CD4-positive, alpha-beta memory T cell (primary cell): ENCODE measurements at regions of chr9 and their contacts with region 1.

Region 1: GRCh38 chr9:83707768-83708514 is at the start of gene UBQLN1:
- DNase-seq: peak; percentile 93 to 98 (median 95)
- H3K4me3 ChIP-seq: peak within 1 kb of the TSS; percentile 94 to 97
- H3K4me3 Mint-ChIP-seq: peak within 1 kb of the TSS; percentile 87 to 99 (median 92)
- H3K27ac ChIP-seq: peak within 1 kb of the TSS; percentile 98
- H3K27ac Mint-ChIP-seq: peak within 1 kb of the TSS; percentile 99 to 100 (median 100)
- H3K4me1 ChIP-seq: peaks cover 42% of the 10 kb centered on the region
- H3K4me1 Mint-ChIP-seq: peaks cover 30 to 45% (median 38%) of the 10 kb centered on the region in 4 donors
- H3K27me3 ChIP-seq: no peaks in the 10 kb centered on the region
- H3K27me3 Mint-ChIP-seq: no peaks in the 10 kb centered on the region
- total RNA-seq, gene UBQLN1: 106 to 122 TPM

Region 2: GRCh38 chr9:83346655-83347420 is 361.1 kb before region 1 on chr9:
- CTCF ChIA-PET with region 1: no interaction called
- POLR2A ChIA-PET with region 1: no interaction called
- intact Hi-C with region 1: no loop called
- DNase-seq: no peak
- H3K4me3 ChIP-seq: no peak overlapping the region
- H3K4me3 Mint-ChIP-seq: no peak overlapping the region
- H3K27ac ChIP-seq: no peak overlapping the region
- H3K27ac Mint-ChIP-seq: no peak overlapping the region
- H3K4me1 ChIP-seq: no peaks in the 10 kb centered on the region
- H3K4me1 Mint-ChIP-seq: no peaks in the 10 kb centered on the region
- H3K27me3 ChIP-seq: no peaks in the 10 kb centered on the region
- H3K27me3 Mint-ChIP-seq: no peaks in the 10 kb centered on the region

Region 3: GRCh38 chr9:83649080-83649479 is 58.9 kb before region 1 on chr9:
- CTCF ChIA-PET with region 1: interaction called, 18 read pairs
- POLR2A ChIA-PET with region 1: interaction called, 5 read pairs
- intact Hi-C with region 1: no loop called
- DNase-seq: peak; percentile 61 to 74 (median 68)
- H3K4me3 ChIP-seq: no peak overlapping the region
- H3K4me3 Mint-ChIP-seq: no peak overlapping the region
- H3K27ac ChIP-seq: no peak overlapping the region
- H3K27ac Mint-ChIP-seq: peak overlapping the region in 3 of 7 donors; percentile 3 to 52 (median 52)
- H3K4me1 ChIP-seq: no peaks in the 10 kb centered on the region
- H3K4me1 Mint-ChIP-seq: peaks cover 0 to 6% (median 2%) of the 10 kb centered on the region in 4 donors
- H3K27me3 ChIP-seq: no peaks in the 10 kb centered on the region
- H3K27me3 Mint-ChIP-seq: no peaks in the 10 kb centered on the region

Region 4: DNA sequence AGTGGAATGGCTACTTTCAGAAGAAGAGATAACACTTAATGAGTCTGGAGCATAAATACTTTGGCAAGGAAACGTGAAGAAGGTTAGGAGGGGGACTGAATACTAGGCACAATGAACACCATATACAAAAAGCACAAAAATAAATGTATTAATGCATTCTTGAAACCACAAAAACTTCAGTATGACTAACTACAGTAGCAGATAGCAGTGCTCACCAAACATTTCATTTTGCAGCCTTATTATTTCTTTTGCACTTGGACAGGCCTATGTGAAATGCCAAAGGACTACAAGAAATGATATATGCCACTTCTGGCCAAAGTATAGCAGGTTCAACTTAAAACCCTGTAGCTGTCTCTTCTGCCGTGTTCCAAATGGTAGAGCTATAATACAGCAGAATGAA is 26.5 kb before region 1 on chr9:
- CTCF ChIA-PET with region 1: interaction called, 6 read pairs
- POLR2A ChIA-PET with region 1: interaction called, 16 read pairs
- intact Hi-C with region 1: no loop called
- DNase-seq: no peak
- H3K4me3 ChIP-seq: no peak overlapping the region
- H3K4me3 Mint-ChIP-seq: no peak overlapping the region
- H3K27ac ChIP-seq: no peak overlapping the region
- H3K27ac Mint-ChIP-seq: peak overlapping the region in 4 of 7 donors; percentile 15 to 59 (median 31)
- H3K4me1 ChIP-seq: peaks cover 15% of the 10 kb centered on the region
- H3K4me1 Mint-ChIP-seq: peaks cover 15 to 40% (median 23%) of the 10 kb centered on the region in 4 donors
- H3K27me3 ChIP-seq: no peaks in the 10 kb centered on the region
- H3K27me3 Mint-ChIP-seq: no peaks in the 10 kb centered on the region

Region 5: GRCh38 chr9:83920927-83921707 is 213.2 kb after region 1 on chr9 and contains the start of gene KIF27:
- CTCF ChIA-PET with region 1: interaction called, 3 read pairs
- POLR2A ChIA-PET with region 1: interaction called, 26 read pairs
- intact Hi-C with region 1: loop called (anchors 1 kb)
- DNase-seq: peak; percentile 93 to 95 (median 94)
- H3K4me3 ChIP-seq: peak within 1 kb of the TSS; percentile 20 to 67
- H3K4me3 Mint-ChIP-seq: peak within 1 kb of the TSS; percentile 90 to 95 (median 92)
- H3K27ac ChIP-seq: peak within 1 kb of the TSS; percentile 83
- H3K27ac Mint-ChIP-seq: peak within 1 kb of the TSS; percentile 84 to 98 (median 97)
- H3K4me1 ChIP-seq: peaks cover 11% of the 10 kb centered on the region
- H3K4me1 Mint-ChIP-seq: peaks cover 8 to 18% (median 10%) of the 10 kb centered on the region in 4 donors
- H3K27me3 ChIP-seq: no peaks in the 10 kb centered on the region
- H3K27me3 Mint-ChIP-seq: no peaks in the 10 kb centered on the region
- total RNA-seq, gene KIF27: 4.7 to 5.2 TPM

Region 6: GRCh38 chr9:83980395-83981125 is 272.6 kb after region 1 on chr9 and contains the start of gene RMI1:
- CTCF ChIA-PET with region 1: interaction called, 3 read pairs
- POLR2A ChIA-PET with region 1: interaction called, 34 read pairs
- intact Hi-C with region 1: loop called (anchors 1 kb)
- DNase-seq: peak; percentile 98 to 99 (median 99)
- H3K4me3 ChIP-seq: peak within 1 kb of the TSS; percentile 90 to 99
- H3K4me3 Mint-ChIP-seq: peak within 1 kb of the TSS; percentile 94 to 100 (median 100)
- H3K27ac ChIP-seq: peak within 1 kb of the TSS; percentile 98
- H3K27ac Mint-ChIP-seq: peak within 1 kb of the TSS; percentile 98 to 100 (median 99)
- H3K4me1 ChIP-seq: peaks cover 40% of the 10 kb centered on the region
- H3K4me1 Mint-ChIP-seq: peaks cover 25 to 68% (median 36%) of the 10 kb centered on the region in 4 donors
- H3K27me3 ChIP-seq: no peaks in the 10 kb centered on the region
- H3K27me3 Mint-ChIP-seq: no peaks in the 10 kb centered on the region
- total RNA-seq, gene RMI1: 6.7 to 7.3 TPM